G401 (cell line): ENCODE measurements at regions of chr7 and their contacts with region 1.

Region 1: GRCh38 chr7:155584763-155585531 is 38.6 kb upstream of the CNPY1 start:
- DNase-seq: peak; percentile 93

Region 2: DNA sequence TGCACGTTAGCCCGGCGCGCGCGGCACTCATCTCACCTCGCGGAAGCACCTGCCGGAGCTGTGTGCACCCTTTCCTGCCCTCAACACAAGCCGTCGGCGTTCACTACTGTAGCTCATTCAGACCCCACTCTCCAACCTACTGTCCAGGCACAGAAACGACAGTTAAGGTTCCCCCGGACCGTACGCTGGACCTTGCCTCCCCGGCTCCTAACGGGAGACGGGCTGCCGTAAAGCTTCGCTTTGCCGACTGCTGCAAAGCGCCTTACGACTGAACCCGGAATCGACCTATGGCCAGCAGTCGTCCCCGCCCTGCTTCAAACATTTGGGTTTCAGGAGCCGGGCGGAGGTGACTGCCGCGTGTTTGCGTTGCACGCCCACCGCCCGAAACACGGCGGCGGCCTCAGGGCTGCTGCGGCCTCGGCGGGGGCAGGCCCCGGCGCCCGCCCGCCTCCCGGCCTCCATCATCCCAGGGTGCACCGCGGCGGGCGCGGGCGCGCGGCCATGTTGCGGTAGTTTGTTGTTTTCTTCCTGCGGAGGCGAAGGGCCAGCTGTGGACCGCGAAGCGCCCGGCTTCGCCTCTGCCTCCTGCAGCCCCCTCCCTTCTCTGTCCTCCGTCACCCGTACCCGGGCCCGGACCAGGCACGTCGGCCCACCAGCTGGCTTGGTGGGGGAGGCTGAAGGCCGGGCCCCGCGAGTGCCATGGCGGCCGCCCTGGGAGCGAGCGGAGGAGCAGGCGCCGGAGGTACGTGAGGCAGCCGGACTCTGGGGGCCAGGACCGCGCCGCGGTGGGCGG is 59.4 kb after region 1 on chr7 and contains the start of gene RBM33:
- in situ Hi-C with region 1: loop called (anchors 5 kb)
- DNase-seq: peak; percentile 85
- total RNA-seq, gene RBM33: 12.3 and 13.2 TPM in 2 replicates

Region 3: GRCh38 chr7:155676052-155676451 is 91.1 kb after region 1 on chr7:
- in situ Hi-C with region 1: no loop called
- DNase-seq: no peak